ENCODE measurements at regions of chr4 and their contacts with region 1.

Region 1: DNA sequence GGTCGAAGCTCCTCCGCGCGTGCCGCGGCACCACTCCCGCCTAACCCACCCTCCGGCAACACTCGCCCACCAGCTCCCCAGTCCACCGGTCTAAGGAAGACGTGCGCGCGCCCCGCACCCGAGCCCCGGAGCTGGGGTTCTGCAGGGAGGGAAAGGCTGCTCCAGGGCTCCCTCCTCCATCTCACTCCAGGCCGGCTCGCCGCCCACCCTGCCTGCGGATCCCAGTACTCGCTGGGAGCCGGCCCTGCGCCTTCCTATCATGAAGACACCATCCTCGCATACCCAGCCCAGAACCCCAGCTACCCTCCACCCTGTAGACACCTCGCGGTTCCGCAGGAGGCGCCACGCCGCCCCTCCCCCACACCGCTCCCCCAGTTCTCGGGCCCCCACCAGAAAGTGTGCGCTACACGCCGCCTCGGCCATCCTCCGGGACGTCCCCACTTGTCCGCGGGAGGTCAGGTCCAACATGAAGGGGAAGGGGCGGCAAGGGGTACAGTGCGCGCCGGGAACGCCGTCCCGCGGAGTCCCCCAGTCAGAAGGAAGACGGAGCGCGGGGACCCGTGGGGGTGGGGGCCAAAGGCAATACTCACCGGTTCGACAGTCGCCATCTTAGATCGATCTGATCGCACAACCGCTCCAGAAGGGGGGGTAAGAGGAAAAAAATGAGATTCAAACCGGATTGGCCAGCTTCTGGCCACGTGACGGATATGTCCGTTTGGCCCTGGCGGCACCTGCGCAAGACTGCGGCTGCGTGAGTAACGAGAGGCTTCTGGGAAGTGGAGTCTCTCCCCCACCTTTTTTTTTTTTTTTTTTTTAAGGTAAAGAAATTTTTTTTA is at the start of gene EIF4E:
- DNase-seq: peak; percentile 97 to 99 (median 98)
- H3K4me3 ChIP-seq: peak within 1 kb of the TSS; percentile 66 to 97
- H3K4me3 Mint-ChIP-seq: peak within 1 kb of the TSS; percentile 92 to 100 (median 98)
- H3K27ac ChIP-seq: peak within 1 kb of the TSS; percentile 82
- H3K27ac Mint-ChIP-seq: peak within 1 kb of the TSS; percentile 94 to 99 (median 98)
- H3K4me1 ChIP-seq: peaks cover 33% of the 10 kb centered on the region
- H3K4me1 Mint-ChIP-seq: peaks cover 17 to 58% (median 30%) of the 10 kb centered on the region in 4 donors
- H3K27me3 ChIP-seq: no peaks in the 10 kb centered on the region
- H3K27me3 Mint-ChIP-seq: peaks cover 0 to 2% of the 10 kb centered on the region in 2 donors
- total RNA-seq, gene EIF4E: 58.2 to 62.5 TPM

Region 2: GRCh38 chr4:99043346-99043745 is 114.6 kb after region 1 on chr4:
- CTCF ChIA-PET with region 1: interaction called, 4 read pairs
- POLR2A ChIA-PET with region 1: interaction called, 10 read pairs
- intact Hi-C with region 1: no loop called
- DNase-seq: peak in 4 of 5 donors; percentile 51 to 70 (median 62)
- H3K4me3 ChIP-seq: no peak overlapping the region
- H3K4me3 Mint-ChIP-seq: peak overlapping the region; percentile 7 to 73 (median 70)
- H3K27ac ChIP-seq: peak overlapping the region; percentile 42
- H3K27ac Mint-ChIP-seq: peak overlapping the region; percentile 69 to 94 (median 89)
- H3K4me1 ChIP-seq: peaks cover 21% of the 10 kb centered on the region
- H3K4me1 Mint-ChIP-seq: peaks cover 10 to 22% (median 18%) of the 10 kb centered on the region in 4 donors
- H3K27me3 ChIP-seq: no peaks in the 10 kb centered on the region
- H3K27me3 Mint-ChIP-seq: no peaks in the 10 kb centered on the region

Region 3: DNA sequence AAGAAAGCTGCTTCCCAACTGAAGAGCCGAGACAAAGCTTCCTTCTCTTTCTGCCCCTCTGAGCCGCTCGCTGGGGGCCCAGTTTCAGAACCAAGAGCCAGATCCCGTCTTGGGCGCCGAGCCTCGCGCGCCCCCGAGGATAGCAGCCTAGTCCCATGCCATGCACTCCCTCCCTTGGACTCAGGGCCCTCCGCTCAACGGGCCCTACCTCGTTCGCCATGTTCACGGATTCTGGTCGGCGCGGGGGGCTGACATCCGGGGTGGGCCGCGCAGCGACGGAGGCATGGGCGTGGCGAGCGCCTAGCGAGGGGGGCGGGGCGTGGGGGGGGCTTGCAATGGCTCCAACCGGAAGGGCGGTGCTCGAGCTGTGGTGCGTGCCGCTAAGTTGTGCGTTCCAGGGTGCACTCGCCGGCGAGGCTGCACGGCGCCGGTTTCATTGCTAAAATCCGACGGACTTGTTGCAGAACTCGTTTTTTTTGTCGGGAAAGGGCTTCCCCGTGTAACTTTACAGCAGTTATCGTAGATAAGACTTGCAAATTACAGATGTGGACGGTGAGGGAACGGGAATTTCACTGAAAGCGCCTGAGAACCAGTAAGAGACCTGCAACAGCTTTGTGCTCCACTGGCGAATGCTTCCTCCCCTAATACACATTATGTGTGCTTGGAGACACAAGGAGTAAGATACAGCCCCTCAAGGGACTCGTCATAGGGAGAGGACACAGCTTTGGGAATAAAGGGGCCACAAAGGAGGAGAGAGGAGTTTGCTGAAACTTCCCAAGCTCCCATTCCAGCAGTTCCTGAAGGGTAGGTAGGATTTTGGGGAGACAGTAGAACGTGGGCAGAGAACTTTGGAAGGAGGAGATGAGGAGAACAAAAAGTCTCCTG is 160.0 kb after region 1 on chr4 and contains the start of gene ADH5:
- CTCF ChIA-PET with region 1: interaction called, 5 read pairs
- POLR2A ChIA-PET with region 1: interaction called, 24 read pairs
- intact Hi-C with region 1: loop called (anchors 1 kb)
- DNase-seq: peak; percentile 83 to 90 (median 86)
- H3K4me3 ChIP-seq: peak within 1 kb of the TSS; percentile 73 to 99
- H3K4me3 Mint-ChIP-seq: peak within 1 kb of the TSS; percentile 92 to 99 (median 98)
- H3K27ac ChIP-seq: peak within 1 kb of the TSS; percentile 77
- H3K27ac Mint-ChIP-seq: peak within 1 kb of the TSS; percentile 89 to 99 (median 98)
- H3K4me1 ChIP-seq: peaks cover 39% of the 10 kb centered on the region
- H3K4me1 Mint-ChIP-seq: peaks cover 35 to 71% (median 54%) of the 10 kb centered on the region in 4 donors
- H3K27me3 ChIP-seq: no peaks in the 10 kb centered on the region
- H3K27me3 Mint-ChIP-seq: no peaks in the 10 kb centered on the region
- total RNA-seq, gene ADH5: 75.6 to 80.5 TPM

Region 4: GRCh38 chr4:99816545-99817308 is 888.0 kb after region 1 on chr4 and contains the start of gene DAPP1:
- CTCF ChIA-PET with region 1: no interaction called
- POLR2A ChIA-PET with region 1: no interaction called
- intact Hi-C with region 1: loop called (anchors 1 kb)
- DNase-seq: peak; percentile 82 to 93 (median 87)
- H3K4me3 ChIP-seq: peak within 1 kb of the TSS; percentile 55 to 92
- H3K4me3 Mint-ChIP-seq: peak within 1 kb of the TSS; percentile 89 to 95 (median 91)
- H3K27ac ChIP-seq: peak within 1 kb of the TSS; percentile 69
- H3K27ac Mint-ChIP-seq: peak within 1 kb of the TSS; percentile 91 to 98 (median 97)
- H3K4me1 ChIP-seq: peaks cover 63% of the 10 kb centered on the region
- H3K4me1 Mint-ChIP-seq: peaks cover 44 to 61% (median 54%) of the 10 kb centered on the region in 4 donors
- H3K27me3 ChIP-seq: no peaks in the 10 kb centered on the region
- H3K27me3 Mint-ChIP-seq: no peaks in the 10 kb centered on the region
- total RNA-seq, gene DAPP1: 21.3 to 23.0 TPM

Region 5: GRCh38 chr4:99894161-99894997 is 965.7 kb after region 1 on chr4 and contains the start of gene LAMTOR3:
- CTCF ChIA-PET with region 1: no interaction called
- POLR2A ChIA-PET with region 1: no interaction called
- intact Hi-C with region 1: loop called (anchors 1 kb)
- DNase-seq: peak; percentile 88 to 94 (median 92)
- H3K4me3 ChIP-seq: peak within 1 kb of the TSS; percentile 76 to 97
- H3K4me3 Mint-ChIP-seq: peak within 1 kb of the TSS; percentile 97 to 100 (median 98)
- H3K27ac ChIP-seq: peak within 1 kb of the TSS; percentile 87
- H3K27ac Mint-ChIP-seq: peak within 1 kb of the TSS; percentile 97 to 99 (median 99)
- H3K4me1 ChIP-seq: peaks cover 34% of the 10 kb centered on the region
- H3K4me1 Mint-ChIP-seq: peaks cover 27 to 47% (median 38%) of the 10 kb centered on the region in 4 donors
- H3K27me3 ChIP-seq: no peaks in the 10 kb centered on the region
- H3K27me3 Mint-ChIP-seq: no peaks in the 10 kb centered on the region
- total RNA-seq, gene LAMTOR3: 24.2 to 27.0 TPM

Measured in CD4-positive, alpha-beta memory T cell (primary cell).